Mammary epithelial cell (primary cell): ENCODE measurements at regions of chr1 and their contacts with region 1.

Region 1: GRCh38 chr1:7752512-7753417 is 18.3 kb upstream of the VAMP3 start:
- DNase-seq: peak; percentile 51
- H3K4me3 ChIP-seq: peak overlapping the region in 2 of 3 experiments; percentile 2 to 18
- H3K27ac ChIP-seq: no peak overlapping the region
- H3K4me1 ChIP-seq: no peaks in the 10 kb centered on the region
- H3K27me3 ChIP-seq: no peaks in the 10 kb centered on the region
- CTCF ChIP-seq: peak; percentile 75 to 77

Region 2: GRCh38 chr1:7704214-7705047 is 48.3 kb before region 1 on chr1:
- CTCF ChIA-PET with region 1: no interaction called
- dilution Hi-C with region 1: loop called (anchors 5 kb)
- in situ Hi-C with region 1: no loop called
- intact Hi-C with region 1: loop called (anchors 5 kb)
- DNase-seq: peak; percentile 88
- H3K4me3 ChIP-seq: peak overlapping the region; percentile 41 to 50 (median 50)
- H3K27ac ChIP-seq: no peak overlapping the region
- H3K4me1 ChIP-seq: peaks cover 5% of the 10 kb centered on the region
- H3K27me3 ChIP-seq: peaks cover 20% of the 10 kb centered on the region
- CTCF ChIP-seq: no peak